Breast epithelium (tissue), 4 donors: ENCODE measurements at regions of chr6 and their contacts with region 1.

Region 1: GRCh38 chr6:74671558-74672025 is 534.3 kb downstream of the COL12A1 start:
- DNase-seq: no peak
- H3K4me3 ChIP-seq: no peak overlapping the region
- H3K27ac ChIP-seq: no peak overlapping the region
- H3K4me1 ChIP-seq: no peaks in the 10 kb centered on the region
- H3K27me3 ChIP-seq: no peaks in the 10 kb centered on the region
- CTCF ChIP-seq: no peak
- POLR2A ChIP-seq: no peak

Region 2: DNA sequence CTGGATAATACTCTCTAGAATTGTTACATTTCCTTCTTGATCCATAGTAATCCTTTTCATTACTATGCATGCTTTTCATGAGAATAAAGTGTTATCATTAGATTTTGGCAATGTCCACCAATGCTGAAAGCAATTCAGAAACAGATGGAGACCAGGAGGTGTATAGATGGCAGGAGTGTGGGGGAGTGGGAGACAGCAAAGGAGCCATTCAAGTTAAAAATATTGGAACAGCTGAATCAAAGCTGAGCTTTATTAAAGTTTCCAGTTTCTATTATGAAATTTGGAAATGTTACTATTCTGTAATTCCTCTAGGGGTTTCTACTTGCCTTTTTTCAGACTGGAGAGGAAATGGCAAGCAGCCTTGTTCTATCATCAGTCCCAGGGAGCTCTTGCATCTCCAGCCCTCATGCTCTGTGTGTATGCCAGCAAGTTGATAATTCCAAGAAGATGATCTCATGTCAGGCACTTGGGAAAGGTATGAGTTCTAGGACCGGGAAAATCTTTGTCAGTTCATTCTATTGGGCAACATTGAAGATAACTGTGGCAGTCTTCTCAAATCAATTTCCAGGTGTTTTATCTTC is 747.6 kb before region 1 on chr6:
- intact Hi-C with region 1: no loop called
- DNase-seq: no peak
- H3K4me3 ChIP-seq: no peak overlapping the region
- H3K27ac ChIP-seq: no peak overlapping the region
- H3K4me1 ChIP-seq: no peaks in the 10 kb centered on the region
- H3K27me3 ChIP-seq: no peaks in the 10 kb centered on the region
- CTCF ChIP-seq: no peak
- POLR2A ChIP-seq: no peak

Region 3: GRCh38 chr6:74585779-74586178 is 85.8 kb before region 1 on chr6:
- intact Hi-C with region 1: no loop called
- DNase-seq: no peak
- H3K4me3 ChIP-seq: no peak overlapping the region
- H3K27ac ChIP-seq: no peak overlapping the region
- H3K4me1 ChIP-seq: no peaks in the 10 kb centered on the region
- H3K27me3 ChIP-seq: no peaks in the 10 kb centered on the region
- CTCF ChIP-seq: no peak
- POLR2A ChIP-seq: no peak

Region 4: GRCh38 chr6:76026101-76026500 is 1354.5 kb after region 1 on chr6:
- intact Hi-C with region 1: loop called (anchors 10 kb)
- DNase-seq: no peak
- H3K4me3 ChIP-seq: no peak overlapping the region
- H3K27ac ChIP-seq: no peak overlapping the region
- H3K4me1 ChIP-seq: no peaks in the 10 kb centered on the region
- H3K27me3 ChIP-seq: no peaks in the 10 kb centered on the region
- CTCF ChIP-seq: no peak
- POLR2A ChIP-seq: no peak